HCT116 (cell line): ENCODE measurements at regions of chr1 and their contacts with region 1.

Region 1: GRCh38 chr1:181134543-181135362 is 46.3 kb downstream of the IER5 start:
- DNase-seq: no peak
- ATAC-seq: peak; percentile 70
- H3K4me3 ChIP-seq: no peak overlapping the region
- H3K27ac ChIP-seq: peak overlapping the region; percentile 76
- H3K4me1 ChIP-seq: peaks cover 29 to 59% of the 10 kb centered on the region in 2 experiments
- H3K27me3 ChIP-seq: no peaks in the 10 kb centered on the region
- CTCF ChIP-seq: no peak
- POLR2A ChIP-seq: no peak
- RAD21 ChIP-seq: no peak

Region 2: DNA sequence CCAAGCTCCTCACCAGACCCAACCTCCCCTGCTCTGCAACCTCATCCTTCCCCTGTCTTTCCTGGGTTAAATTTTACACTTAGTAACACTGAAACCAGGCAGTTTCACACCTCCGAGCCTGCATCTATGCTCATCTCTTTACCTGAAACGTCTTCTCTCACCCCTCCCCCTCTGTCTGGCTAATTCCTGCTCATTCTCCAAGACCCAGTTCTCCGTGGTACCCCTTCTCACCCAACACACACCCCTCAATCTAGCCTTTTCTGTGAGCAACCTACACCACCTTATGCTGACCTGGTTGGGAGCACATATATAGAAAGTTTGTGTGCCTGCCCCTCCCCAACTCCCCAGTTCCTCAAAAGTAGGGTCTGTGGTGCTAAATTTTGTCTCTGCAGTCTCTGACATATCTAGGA is 225.7 kb before region 1 on chr1:
- CTCF ChIA-PET with region 1: no interaction called
- POLR2A ChIA-PET with region 1: no interaction called
- RAD21 ChIA-PET with region 1: no interaction called
- intact Hi-C with region 1: no loop called
- DNase-seq: no peak
- ATAC-seq: no peak
- H3K4me3 ChIP-seq: no peak overlapping the region
- H3K27ac ChIP-seq: no peak overlapping the region
- H3K4me1 ChIP-seq: no peaks in the 10 kb centered on the region
- H3K27me3 ChIP-seq: no peaks in the 10 kb centered on the region
- CTCF ChIP-seq: no peak
- POLR2A ChIP-seq: no peak
- RAD21 ChIP-seq: no peak

Region 3: GRCh38 chr1:181105134-181106021 is 29.4 kb before region 1 on chr1:
- CTCF ChIA-PET with region 1: no interaction called
- POLR2A ChIA-PET with region 1: interaction called, 19 read pairs
- RAD21 ChIA-PET with region 1: no interaction called
- intact Hi-C with region 1: no loop called
- DNase-seq: peak; percentile 56
- ATAC-seq: peak; percentile 88
- H3K4me3 ChIP-seq: peak overlapping the region; percentile 61 to 66
- H3K27ac ChIP-seq: peak overlapping the region; percentile 80
- H3K4me1 ChIP-seq: peaks cover 61 to 74% of the 10 kb centered on the region in 2 experiments
- H3K27me3 ChIP-seq: no peaks in the 10 kb centered on the region
- CTCF ChIP-seq: no peak
- POLR2A ChIP-seq: no peak
- RAD21 ChIP-seq: no peak